Activated B cell treated with CpG ODN at 0.5 μM for 24 hours (primary cell): ENCODE measurements at regions of chr11 and their contacts with region 1.

Region 1: DNA sequence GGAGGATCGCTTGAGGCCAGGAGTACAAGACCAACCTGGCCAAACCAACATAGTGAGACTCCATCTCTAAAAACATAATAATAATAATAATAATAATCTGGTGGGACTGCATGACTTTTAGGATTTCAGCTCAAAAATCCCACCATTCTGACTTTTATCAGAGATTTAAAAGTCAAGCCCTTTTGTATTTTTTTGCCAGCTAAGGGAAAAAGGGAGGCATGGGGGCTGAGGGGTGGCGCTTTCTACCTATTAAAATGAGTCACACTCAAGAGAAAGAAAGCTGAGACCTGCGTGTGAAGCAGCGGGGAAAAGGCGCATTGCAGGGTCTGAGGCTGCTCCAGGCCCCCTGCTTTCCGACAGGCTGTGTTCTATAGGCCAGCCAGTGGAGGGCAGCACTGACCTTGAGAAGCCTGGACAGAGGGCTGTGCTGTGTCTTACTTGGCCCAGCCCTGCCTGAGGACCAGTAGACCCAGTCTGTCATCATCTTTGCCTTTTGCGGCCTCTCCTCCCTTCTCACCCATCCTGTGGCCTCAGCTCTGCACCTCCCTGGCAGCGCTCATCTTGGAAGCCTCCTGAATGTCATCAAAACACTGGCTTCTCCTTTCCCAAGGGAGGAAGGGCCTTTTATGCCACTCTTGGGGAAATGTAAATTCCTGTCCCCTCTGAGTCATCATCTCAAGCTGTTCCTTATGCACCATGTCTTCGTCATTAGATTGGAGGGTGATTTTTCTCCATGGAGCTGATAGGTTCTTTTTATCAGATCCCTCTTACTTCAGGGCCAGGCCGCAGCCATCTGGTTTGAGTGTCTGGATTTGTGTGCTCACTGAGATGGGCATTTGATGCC is 12.7 kb upstream of the MAPK8IP1 start:
- DNase-seq: peak; percentile 31
- ATAC-seq: peak; percentile 81
- H3K4me3 Mint-ChIP-seq: no peak overlapping the region
- H3K27ac Mint-ChIP-seq: no peak overlapping the region
- H3K4me1 Mint-ChIP-seq: no peaks in the 10 kb centered on the region
- H3K27me3 Mint-ChIP-seq: no peaks in the 10 kb centered on the region
- CTCF ChIP-seq: no peak

Region 2: DNA sequence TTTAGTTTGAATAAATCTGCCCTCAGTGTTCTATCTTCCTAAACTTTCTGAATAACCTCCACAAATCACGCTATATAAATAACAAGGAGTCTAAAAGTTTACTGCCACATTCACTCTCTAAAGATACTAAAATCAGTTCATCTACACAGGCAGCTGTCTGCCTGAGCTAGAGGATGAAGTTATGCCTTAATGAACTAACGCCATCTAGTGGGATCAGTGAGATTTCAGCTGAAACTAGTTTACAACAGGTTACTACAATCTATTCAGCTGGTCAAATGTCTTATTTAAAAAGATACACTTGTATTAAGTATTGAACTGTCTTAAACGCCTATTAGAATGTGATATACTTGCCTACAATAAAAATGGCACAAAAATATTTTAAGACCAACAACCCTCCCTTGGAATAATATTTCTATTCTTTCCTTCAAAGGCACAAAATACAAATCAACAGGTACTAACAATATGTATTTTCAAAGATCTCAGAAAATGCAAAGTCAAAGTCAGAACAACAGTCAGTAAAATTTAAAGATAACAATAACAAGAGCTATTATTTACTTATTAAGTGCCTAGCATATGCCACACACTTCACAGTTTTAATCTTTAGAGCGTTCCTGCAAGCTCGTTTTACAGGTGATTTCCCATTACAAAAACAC is 133.8 kb after region 1 on chr11:
- CTCF ChIA-PET with region 1: interaction called, 78 read pairs
- POLR2A ChIA-PET with region 1: no interaction called
- intact Hi-C with region 1: loop called (anchors 1 kb)
- DNase-seq: no peak
- ATAC-seq: peak; percentile 76
- H3K4me3 Mint-ChIP-seq: no peak overlapping the region
- H3K27ac Mint-ChIP-seq: no peak overlapping the region
- H3K4me1 Mint-ChIP-seq: peaks cover 3% of the 10 kb centered on the region
- H3K27me3 Mint-ChIP-seq: no peaks in the 10 kb centered on the region
- CTCF ChIP-seq: peak; percentile 20